ENCODE measurements at regions of chr10 and their contacts with region 1.

Region 1: GRCh38 chr10:91551856-91552255 is 81.0 kb downstream of the PPP1R3C start:
- DNase-seq: no peak
- H3K4me3 ChIP-seq: no peak overlapping the region
- CTCF ChIP-seq: peak; percentile 79

Region 2: DNA sequence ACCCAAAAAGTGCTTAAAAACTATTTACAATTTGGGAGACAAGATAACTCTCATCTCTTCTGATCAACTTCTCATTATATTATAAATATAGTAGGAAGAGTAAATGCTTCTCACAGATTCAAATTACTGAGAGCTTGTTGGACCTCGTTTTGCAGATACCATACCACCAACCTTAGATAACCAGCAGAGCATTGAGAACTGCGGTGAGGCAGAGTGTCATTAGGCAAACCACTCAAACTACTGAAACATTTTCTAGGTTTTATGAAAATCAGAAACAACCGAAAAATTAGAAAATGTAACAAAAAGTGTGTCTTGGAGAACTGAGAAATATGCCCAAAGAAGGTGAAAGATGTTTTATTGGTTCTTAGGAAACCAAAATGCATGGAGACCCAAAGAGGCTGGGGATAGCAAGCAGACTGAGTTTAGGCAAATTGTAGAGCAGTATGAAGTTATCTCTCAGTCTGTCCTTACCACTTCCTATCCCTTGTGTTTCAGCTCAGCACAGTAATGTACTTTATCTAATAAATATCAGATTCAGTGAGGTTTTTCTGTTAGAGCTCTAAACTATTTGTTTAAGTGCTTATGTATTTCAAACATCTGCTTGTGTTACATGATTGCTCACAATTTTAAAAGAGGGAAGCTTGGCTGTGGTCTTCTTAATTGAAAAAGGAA is 63.8 kb before region 1 on chr10:
- CTCF ChIA-PET with region 1: interaction called, 118 read pairs
- POLR2A ChIA-PET with region 1: no interaction called
- DNase-seq: no peak
- H3K4me3 ChIP-seq: no peak overlapping the region
- CTCF ChIP-seq: no peak

Region 3: GRCh38 chr10:91528080-91528479 is 23.8 kb before region 1 on chr10:
- CTCF ChIA-PET with region 1: interaction called, 11 read pairs
- POLR2A ChIA-PET with region 1: no interaction called
- DNase-seq: no peak
- H3K4me3 ChIP-seq: no peak overlapping the region
- CTCF ChIP-seq: no peak

Region 4: DNA sequence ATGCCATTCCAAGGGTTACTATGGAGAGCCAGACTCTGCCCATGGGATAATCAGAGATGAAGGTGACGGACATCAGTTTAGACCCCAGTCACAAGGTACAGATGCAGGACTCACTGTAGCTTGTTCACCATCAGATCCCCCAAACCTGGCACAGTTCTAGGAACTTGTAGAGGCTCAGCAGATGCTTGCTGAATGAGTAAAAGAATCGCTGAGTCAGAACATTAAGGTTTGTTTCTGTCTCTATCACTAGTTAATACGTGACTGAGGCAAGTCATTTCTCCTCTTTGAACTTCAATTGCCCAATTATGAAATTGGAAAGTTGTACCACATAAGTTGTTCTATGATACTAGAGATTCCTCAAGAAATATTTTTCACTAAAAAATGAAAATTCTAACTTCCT is 16.0 kb after region 1 on chr10:
- CTCF ChIA-PET with region 1: interaction called, 51 read pairs
- POLR2A ChIA-PET with region 1: no interaction called
- DNase-seq: no peak
- H3K4me3 ChIP-seq: no peak overlapping the region
- CTCF ChIP-seq: no peak

Region 5: DNA sequence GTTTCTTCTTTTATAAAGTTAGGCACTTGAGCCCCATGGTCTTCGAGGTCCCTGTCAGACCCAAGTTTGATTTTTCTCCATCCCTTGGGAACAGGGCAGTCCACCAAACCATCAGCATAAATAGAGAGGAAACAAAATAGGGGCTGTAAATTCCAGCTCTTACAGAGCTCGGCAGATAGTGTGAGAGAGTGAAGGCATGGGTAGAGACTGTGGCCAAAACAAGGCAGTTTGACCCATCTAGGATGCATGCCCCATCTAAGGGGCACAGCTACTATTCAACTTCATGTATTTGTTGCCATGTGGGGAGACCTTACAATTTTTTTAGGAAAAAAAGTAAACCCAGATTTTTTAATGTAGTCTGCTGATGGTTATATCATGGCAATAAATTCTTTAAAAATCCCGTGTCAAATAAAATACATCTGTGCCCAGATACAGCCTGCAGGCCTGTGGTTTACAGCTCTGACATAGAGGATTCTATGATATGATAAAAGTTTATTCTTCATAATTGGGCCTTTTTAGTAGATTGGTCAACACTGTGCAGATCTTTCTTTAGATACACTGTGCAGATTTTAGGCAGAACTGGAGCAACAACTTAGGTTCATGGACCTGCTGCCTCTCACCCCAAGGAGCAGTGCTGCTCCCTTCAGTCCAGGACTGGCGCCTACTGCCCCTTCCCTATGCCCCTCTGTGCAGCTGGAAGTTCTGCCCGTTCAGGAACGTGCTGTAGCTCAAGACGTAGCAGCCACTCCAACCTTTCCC is 75.7 kb after region 1 on chr10:
- CTCF ChIA-PET with region 1: interaction called, 142 read pairs
- POLR2A ChIA-PET with region 1: interaction called, 14 read pairs
- DNase-seq: no peak
- H3K4me3 ChIP-seq: peak overlapping the region; percentile 79
- CTCF ChIP-seq: peak; percentile 3

Region 6: DNA sequence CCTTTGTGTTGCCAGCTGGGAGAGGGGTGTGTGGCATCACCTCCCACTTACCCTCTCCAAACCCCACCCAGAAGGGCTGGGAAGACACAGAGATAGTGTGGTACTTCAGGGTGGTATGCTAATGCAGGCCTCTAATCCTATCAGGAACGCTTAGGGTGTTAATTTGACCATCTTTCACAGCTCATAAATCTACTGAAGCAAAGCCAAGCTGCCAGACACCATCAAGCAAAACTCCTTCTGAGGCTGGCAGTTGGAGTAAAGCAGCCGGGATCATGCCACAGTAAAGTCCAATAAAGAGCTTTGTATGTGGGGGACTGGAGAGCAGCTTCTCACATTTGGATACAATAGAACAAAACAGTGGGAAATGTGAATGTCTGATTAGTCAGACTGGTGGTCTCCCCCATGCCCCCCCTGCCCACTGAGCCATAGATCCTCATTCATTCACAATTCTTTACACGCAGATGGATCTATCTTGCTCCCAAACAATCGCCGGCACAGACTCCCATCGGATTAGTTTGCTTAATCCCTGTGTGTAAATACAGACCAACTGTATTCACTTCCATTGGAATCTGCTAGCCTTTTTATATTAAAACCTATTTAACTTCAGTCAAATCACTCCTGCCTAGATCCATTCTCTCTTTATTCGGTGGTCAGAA is 327.8 kb after region 1 on chr10:
- CTCF ChIA-PET with region 1: no interaction called
- POLR2A ChIA-PET with region 1: no interaction called
- DNase-seq: no peak
- H3K4me3 ChIP-seq: no peak overlapping the region
- CTCF ChIP-seq: no peak